ENCODE measurements at regions of chr15 and their contacts with region 1.

Region 1: DNA sequence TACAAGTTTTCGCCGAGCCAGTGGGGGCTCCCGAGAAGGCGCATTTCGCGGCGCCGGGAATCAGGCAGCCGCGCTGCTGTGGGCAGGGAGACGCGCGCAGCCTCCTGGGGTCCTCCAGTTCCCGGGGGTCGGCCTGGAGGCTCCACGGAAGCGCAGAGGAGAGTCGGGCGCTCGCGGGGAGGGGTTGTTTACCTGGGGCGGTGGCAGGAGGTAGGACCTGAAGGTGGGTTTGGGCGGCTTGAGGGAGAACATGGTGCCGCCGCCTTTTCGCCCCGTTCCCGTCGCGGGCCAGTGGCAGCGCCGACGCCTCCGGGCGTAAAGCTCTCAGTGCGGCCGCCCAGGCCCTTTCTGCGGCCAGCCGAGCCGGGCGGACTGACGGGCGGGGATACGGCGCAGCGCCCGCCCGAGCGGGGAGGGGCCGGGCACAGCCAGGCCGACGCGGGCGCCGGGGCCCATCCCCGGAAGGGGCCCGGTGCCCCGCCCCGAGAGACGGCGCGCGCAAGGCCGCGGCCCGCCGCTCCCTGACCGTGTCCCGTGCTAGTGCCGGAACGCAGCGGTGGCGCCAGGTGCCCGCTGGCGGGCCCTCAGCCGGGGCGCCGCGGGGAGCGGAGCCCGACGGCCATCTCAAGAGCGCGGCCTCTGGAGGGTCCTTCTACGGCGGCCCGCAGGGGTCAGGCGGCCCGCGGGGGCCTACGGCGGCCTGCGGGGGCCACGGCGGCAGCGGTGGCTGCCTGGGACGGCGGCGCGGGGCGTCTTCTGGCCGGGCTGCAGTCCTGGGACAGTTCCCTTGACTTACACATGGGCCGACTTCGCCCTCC is at the start of gene MTMR10:
- DNase-seq: peak; percentile 78 to 94 (median 92)
- ATAC-seq: peak; percentile 98
- H3K4me3 ChIP-seq: peak within 1 kb of the TSS; percentile 84
- H3K27ac ChIP-seq: peak within 1 kb of the TSS; percentile 82
- H3K4me1 ChIP-seq: peaks cover 0 to 12% of the 10 kb centered on the region in 2 experiments; a peak in 3 of 5 replicates
- H3K27me3 ChIP-seq: no peaks in the 10 kb centered on the region
- CTCF ChIP-seq: no peak
- EP300 ChIP-seq: no peak
- POLR2A ChIP-seq: peak; percentile 79
- RAD21 ChIP-seq: no peak
- polyA plus RNA-seq, gene MTMR10: 1.6 to 1.8 TPM

Region 2: GRCh38 chr15:30859091-30859874 is 132.2 kb before region 1 on chr15:
- CTCF ChIA-PET with region 1: no interaction called
- POLR2A ChIA-PET with region 1: no interaction called
- in situ Hi-C with region 1: no loop called
- intact Hi-C with region 1: no loop called
- DNase-seq: peak; percentile 13 to 19 (median 17)
- ATAC-seq: peak; percentile 70; the same call in 2 of the 3 replicates
- H3K4me3 ChIP-seq: no peak overlapping the region
- H3K27ac ChIP-seq: no peak overlapping the region
- H3K4me1 ChIP-seq: no peaks in the 10 kb centered on the region
- H3K27me3 ChIP-seq: no peaks in the 10 kb centered on the region; a peak in 2 of 5 replicates
- CTCF ChIP-seq: peak; percentile 53 to 63 (median 59); a peak in 5 of 6 replicates
- EP300 ChIP-seq: no peak
- POLR2A ChIP-seq: no peak
- RAD21 ChIP-seq: peak in 1 of 2 experiments; percentile 43; a peak in 2 of 4 replicates

Region 3: DNA sequence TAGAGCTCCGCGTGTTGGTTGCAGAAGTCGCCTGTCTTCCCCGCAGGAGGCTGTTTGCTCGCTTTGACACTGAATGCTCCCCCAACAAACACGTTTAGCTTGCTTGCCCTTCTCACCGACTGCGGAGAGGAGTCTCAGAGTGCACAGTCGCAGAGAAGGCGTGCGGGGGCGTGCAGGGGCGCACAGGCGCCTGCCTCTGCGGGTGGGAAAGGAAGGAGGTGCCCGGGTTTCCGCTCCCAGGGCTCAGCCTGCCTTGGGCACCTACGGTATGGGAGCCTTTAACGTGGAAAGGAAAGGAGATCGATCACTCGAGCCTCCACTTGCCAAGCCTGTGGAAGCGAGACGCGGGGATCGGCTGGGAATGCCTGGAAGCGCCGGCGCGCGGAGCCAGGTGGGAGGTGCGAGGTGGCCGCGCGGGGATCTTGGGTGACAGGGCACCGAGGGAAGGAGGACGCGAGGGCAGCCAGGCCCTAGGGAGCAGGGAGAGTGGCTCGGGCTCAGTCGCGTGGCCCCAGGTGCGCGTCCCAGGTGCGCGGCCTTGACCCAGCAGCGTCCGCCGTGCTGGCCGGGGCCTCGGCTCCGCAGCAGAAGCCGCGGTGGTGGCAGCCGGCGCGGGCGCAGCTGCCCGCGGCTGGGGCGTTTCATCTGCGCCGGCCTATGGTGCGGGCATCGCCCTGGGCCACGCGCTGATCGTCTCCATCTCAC is 87.8 kb before region 1 on chr15 and contains the start of gene FAN1:
- CTCF ChIA-PET with region 1: no interaction called
- POLR2A ChIA-PET with region 1: no interaction called
- in situ Hi-C with region 1: no loop called
- intact Hi-C with region 1: loop called (anchors 5 kb)
- DNase-seq: peak; percentile 76 to 88 (median 81)
- ATAC-seq: peak; percentile 95
- H3K4me3 ChIP-seq: peak within 1 kb of the TSS; percentile 58
- H3K27ac ChIP-seq: peak within 1 kb of the TSS; percentile 65
- H3K4me1 ChIP-seq: peaks cover 5 to 9% of the 10 kb centered on the region in 2 experiments; a peak in 3 of 5 replicates
- H3K27me3 ChIP-seq: no peaks in the 10 kb centered on the region; a peak in 1 of 5 replicates
- CTCF ChIP-seq: no peak
- EP300 ChIP-seq: no peak
- POLR2A ChIP-seq: peak; percentile 79
- RAD21 ChIP-seq: no peak
- polyA plus RNA-seq, gene FAN1: 1.5 to 2.0 TPM

Region 4: DNA sequence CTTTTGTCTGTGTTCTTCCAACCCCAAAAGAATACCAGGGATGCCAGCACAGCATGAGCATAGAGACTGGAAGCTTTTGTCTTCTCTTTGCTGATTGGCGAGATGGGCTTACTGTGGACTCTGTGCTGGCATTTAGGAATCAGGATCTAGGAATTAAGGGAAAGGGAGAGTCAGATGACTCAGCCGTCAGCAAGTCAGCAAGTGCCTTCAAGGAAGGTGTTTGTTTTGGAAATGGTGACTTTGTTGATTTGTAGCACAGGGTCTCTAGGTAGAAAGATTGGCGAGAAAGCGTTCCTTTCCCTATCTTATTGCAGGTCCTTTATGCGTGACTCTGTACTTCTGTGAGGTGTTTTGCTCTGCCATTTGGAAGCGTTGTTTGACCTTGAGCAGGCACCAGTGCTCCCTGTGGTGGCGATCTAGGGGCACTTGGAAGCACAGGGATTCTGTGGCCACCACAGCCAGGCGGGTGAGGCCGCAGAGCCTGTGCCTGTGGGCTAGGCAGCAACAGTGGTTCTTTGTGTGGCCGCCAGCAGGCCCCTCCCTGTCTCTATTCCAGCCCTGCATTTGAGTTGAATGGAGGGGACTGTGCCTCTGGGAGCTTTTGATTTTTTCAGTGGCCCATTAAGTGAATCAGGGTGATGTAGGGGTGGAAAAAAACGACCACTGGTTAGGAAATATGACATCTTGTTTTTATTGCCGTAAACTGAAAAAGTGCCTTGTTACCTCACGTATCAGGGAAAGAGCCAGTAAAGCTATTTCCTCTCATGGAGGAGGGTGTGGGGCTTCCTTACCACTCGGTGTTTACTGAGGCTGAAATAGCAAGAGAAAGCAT is 68.8 kb before region 1 on chr15:
- CTCF ChIA-PET with region 1: no interaction called
- POLR2A ChIA-PET with region 1: no interaction called
- in situ Hi-C with region 1: no loop called
- intact Hi-C with region 1: no loop called
- DNase-seq: no peak
- ATAC-seq: no peak
- H3K4me3 ChIP-seq: no peak overlapping the region
- H3K27ac ChIP-seq: no peak overlapping the region
- H3K4me1 ChIP-seq: no peaks in the 10 kb centered on the region
- H3K27me3 ChIP-seq: no peaks in the 10 kb centered on the region; a peak in 1 of 5 replicates
- CTCF ChIP-seq: no peak
- EP300 ChIP-seq: no peak
- POLR2A ChIP-seq: no peak
- RAD21 ChIP-seq: no peak

Region 5: DNA sequence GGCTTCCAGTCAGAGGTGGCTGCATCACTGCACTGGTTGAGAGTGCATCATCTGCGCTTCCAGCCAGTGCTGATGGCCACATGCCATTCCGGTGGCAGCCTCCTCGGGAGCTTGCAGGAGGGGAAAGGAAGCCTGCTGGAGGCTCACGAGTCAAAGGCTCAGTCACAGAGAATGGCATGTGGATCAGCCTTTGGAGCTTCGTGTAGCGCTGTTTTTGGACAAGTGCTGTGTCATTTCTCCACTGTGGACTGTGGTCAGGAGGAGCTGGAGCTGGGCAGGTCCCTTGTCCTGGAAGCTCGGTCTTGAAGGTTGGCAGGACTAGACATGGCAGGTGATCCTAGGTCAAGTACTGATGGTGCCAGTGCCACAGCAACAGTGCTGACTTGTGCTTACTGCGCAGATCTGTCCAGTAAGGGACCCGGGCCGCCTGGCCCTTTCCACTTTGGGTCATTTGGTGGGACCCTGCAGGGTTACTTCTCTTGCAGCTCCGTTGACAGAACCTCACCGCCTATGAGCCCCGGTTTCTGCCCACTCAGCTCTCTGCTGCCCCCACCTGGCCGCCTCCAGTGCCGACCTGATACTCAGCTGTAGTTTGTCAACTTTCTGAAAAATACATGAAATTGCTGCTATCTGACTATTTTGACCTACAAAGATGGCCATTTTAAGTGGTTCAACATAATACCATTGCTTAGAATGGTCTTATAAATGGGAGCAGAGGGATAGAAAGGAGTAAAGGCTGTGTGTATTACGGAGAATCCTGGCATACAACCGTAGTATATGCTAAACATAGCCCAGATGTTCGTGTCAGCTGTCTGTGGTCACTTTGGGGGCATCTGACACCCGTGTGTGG is 137.7 kb after region 1 on chr15:
- CTCF ChIA-PET with region 1: no interaction called
- POLR2A ChIA-PET with region 1: no interaction called
- in situ Hi-C with region 1: no loop called
- intact Hi-C with region 1: loop called (anchors 10 kb)
- DNase-seq: peak; percentile 59 to 68 (median 66)
- ATAC-seq: peak; percentile 96
- H3K4me3 ChIP-seq: no peak overlapping the region
- H3K27ac ChIP-seq: no peak overlapping the region
- H3K4me1 ChIP-seq: no peaks in the 10 kb centered on the region
- H3K27me3 ChIP-seq: peaks cover 5 to 22% of the 10 kb centered on the region in 2 experiments; a peak in 3 of 5 replicates
- CTCF ChIP-seq: peak; percentile 83 to 94 (median 86)
- EP300 ChIP-seq: no peak
- POLR2A ChIP-seq: no peak
- RAD21 ChIP-seq: peak; percentile 63 to 83